Mammary epithelial cell (primary cell): ENCODE measurements at regions of chr1 and their contacts with region 1.

Region 1: DNA sequence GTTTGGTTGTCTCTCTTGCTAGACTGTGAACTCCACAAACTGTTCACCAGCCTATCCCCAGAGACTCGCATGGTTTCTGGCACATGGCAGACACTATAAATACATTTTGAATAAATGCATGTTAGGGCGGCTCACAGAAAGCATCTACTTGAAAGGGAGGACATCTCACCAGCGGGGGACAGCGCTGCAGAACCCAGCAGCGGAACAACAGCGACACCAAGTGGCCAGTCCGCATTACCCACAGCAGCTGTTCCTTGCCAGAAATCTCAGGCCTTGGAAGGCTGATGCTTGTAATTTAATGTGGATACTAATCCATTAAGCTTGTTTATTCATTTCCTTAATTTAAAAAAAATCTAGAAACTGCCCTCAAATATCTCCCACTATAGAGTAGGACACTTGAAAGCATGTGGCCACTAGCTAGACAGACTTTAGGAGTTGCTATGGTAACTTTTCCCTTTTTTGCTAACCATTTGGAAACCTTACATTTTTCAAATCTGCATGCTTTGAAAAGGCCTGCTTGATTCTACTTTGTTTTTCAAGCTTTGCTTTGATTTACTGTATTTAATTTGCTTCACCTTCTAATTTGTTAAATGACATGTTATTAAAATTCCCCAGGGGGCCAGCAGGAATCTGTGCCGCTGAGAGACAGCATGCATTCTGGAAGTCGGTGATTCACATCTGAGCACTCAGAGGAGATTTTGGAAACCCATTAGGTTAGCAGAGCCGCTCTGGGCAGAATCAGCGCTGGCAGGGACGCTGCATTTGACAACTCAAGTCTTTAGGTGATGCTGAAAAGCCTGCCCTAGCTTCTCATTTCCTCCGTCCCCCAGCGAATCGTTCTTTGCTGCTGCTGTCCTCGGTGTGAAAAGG is 63.5 kb upstream of the SSX2IP start:
- DNase-seq: peak; percentile 54
- H3K4me3 ChIP-seq: no peak overlapping the region
- H3K27ac ChIP-seq: no peak overlapping the region
- H3K4me1 ChIP-seq: peaks cover 24% of the 10 kb centered on the region
- H3K27me3 ChIP-seq: no peaks in the 10 kb centered on the region
- CTCF ChIP-seq: peak; percentile 96 to 99

Region 2: DNA sequence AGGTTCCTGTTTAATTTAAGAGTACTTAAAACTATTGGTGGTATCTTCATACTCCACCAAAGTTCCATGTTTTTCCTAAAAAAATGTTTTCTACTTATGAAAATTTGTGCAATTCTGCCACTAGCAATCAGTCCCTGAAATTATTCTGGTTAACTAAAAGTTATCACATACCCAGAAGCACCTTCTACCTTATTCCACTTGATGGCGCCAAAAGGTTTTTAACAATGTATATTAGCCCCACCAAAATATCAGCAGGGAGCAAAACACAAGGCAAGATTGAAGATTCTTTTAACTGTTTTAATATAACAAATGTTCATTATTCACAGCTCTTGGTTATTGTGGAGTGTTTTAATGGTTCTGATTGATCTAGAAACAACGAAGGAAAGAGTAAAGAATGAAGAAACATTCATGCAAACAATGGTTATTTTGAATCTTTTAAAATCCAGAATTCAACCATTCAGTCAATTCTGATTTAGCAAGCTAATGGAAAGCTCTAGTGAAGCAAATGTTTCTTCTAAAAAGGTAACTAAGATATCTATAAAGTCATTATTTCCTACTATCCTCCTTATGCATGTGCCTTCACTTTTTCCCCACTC is 822.0 kb before region 1 on chr1:
- CTCF ChIA-PET with region 1: no interaction called
- dilution Hi-C with region 1: no loop called
- in situ Hi-C with region 1: no loop called
- intact Hi-C with region 1: loop called (anchors 1 kb)
- DNase-seq: peak; percentile 16
- H3K4me3 ChIP-seq: no peak overlapping the region
- H3K27ac ChIP-seq: no peak overlapping the region
- H3K4me1 ChIP-seq: no peaks in the 10 kb centered on the region
- H3K27me3 ChIP-seq: no peaks in the 10 kb centered on the region
- CTCF ChIP-seq: peak; percentile 67 to 75

Region 3: DNA sequence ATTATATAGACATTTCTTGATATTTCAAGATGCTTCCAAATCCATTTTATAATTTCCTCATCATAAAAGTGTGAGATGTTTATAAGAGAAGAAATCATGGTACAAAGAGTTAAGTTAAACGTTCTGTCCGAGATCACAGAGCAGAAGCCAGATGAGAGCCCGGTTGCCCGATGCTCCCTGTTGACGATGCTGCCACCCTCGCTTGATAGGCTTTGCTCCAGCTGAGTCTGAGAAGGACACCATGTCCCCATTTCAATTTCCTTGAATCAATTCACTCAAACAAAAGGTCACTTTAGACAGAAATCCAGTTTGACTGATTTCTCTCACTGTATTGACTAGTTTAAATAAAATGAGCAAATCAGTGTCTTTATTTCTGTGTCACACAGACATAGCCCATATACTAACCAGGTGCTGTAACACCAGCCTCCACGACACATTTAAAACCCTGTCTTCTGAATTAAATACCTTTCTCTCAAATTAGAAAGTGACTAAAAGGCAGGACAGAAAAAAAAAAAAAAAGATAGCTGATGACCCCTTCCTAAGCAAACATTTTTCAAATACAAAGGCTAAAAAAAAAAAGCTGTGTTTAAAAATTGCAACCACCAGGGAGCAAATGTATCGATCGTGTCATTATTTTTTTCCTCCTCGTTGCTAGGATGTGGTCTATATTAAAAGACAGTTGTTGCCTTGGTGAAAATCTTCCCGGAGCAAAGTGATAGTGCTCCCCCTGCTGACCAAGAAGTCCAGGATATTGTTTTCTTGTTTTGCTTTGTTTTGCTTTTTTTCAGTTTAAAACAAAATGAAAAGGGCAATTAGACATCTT is 320.3 kb before region 1 on chr1:
- CTCF ChIA-PET with region 1: no interaction called
- dilution Hi-C with region 1: loop called (anchors 25 kb)
- in situ Hi-C with region 1: loop called (anchors 10 to 25 kb)
- intact Hi-C with region 1: loop called (anchors 2 kb)
- DNase-seq: peak; percentile 61
- H3K4me3 ChIP-seq: no peak overlapping the region
- H3K27ac ChIP-seq: peak overlapping the region; percentile 33
- H3K4me1 ChIP-seq: peaks cover 16% of the 10 kb centered on the region
- H3K27me3 ChIP-seq: no peaks in the 10 kb centered on the region
- CTCF ChIP-seq: peak; percentile 66 to 73

Region 4: DNA sequence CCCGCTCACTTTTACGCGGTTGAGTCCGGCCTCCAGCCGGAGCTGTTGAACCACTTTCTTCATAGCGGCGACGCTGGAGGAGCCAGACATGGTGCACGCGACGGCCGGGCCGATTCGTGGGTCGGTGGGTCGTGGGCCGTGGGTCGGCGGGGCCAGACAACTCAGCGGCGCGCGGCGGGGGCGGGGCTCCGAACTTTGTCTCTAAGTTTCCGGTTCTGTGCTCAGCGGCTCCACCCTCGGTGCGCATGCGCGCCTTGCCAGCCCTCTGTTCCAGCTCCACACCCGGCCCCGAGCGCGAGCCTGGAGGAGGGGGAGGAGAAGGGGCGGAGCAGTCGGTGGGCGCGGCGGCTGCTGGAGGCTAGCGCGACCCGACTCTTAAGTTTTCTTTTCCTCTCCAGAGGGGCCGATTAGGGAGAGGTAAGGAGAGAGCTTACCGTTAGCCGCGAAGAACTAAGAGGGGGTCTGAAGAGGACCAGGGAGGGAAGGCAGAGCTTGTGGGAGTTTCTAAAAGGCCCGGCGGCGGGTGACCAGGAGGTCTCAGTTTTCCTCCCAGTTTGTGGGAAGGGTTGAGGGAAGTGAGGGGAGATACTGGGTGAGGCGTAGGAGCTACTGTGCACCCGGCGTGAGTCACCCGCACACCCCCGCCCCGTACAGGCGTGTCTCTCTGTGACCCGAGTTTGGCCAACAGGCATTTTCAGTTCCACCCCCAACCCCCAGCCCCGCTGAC is 247.6 kb before region 1 on chr1 and contains the starts of genes GNG5 and SPATA1:
- CTCF ChIA-PET with region 1: no interaction called
- dilution Hi-C with region 1: no loop called
- in situ Hi-C with region 1: no loop called
- intact Hi-C with region 1: loop called (anchors 1 kb)
- DNase-seq: peak; percentile 95
- H3K4me3 ChIP-seq: peak within 1 kb of the TSS; percentile 85 to 98 (median 95)
- H3K27ac ChIP-seq: peak within 1 kb of the TSS; percentile 92
- H3K4me1 ChIP-seq: peaks cover 16% of the 10 kb centered on the region
- H3K27me3 ChIP-seq: no peaks in the 10 kb centered on the region
- CTCF ChIP-seq: no peak
- total RNA-seq, gene GNG5: 20.5 to 115 TPM
- total RNA-seq, gene SPATA1: 0.33 to 1.4 TPM

Region 5: GRCh38 chr1:84644472-84644871 is 109.3 kb before region 1 on chr1:
- CTCF ChIA-PET with region 1: no interaction called
- dilution Hi-C with region 1: no loop called
- in situ Hi-C with region 1: loop called in 1 of 2 experiments (anchors 10 kb)
- intact Hi-C with region 1: no loop called
- DNase-seq: no peak
- H3K4me3 ChIP-seq: no peak overlapping the region
- H3K27ac ChIP-seq: no peak overlapping the region
- H3K4me1 ChIP-seq: no peaks in the 10 kb centered on the region
- H3K27me3 ChIP-seq: no peaks in the 10 kb centered on the region
- CTCF ChIP-seq: no peak

Region 6: GRCh38 chr1:84690397-84691121 is 63.2 kb before region 1 on chr1 and contains the start of gene SSX2IP:
- CTCF ChIA-PET with region 1: no interaction called
- dilution Hi-C with region 1: no loop called
- in situ Hi-C with region 1: no loop called
- intact Hi-C with region 1: loop called (anchors 2 kb)
- DNase-seq: peak; percentile 96
- H3K4me3 ChIP-seq: peak within 1 kb of the TSS; percentile 75 to 83 (median 79)
- H3K27ac ChIP-seq: peak within 1 kb of the TSS; percentile 46
- H3K4me1 ChIP-seq: peaks cover 17% of the 10 kb centered on the region
- H3K27me3 ChIP-seq: no peaks in the 10 kb centered on the region
- CTCF ChIP-seq: no peak
- total RNA-seq, gene SSX2IP: 11.3 to 22.5 TPM

Region 7: GRCh38 chr1:84896279-84896678 is 142.5 kb after region 1 on chr1:
- CTCF ChIA-PET with region 1: no interaction called
- dilution Hi-C with region 1: no loop called
- in situ Hi-C with region 1: no loop called
- intact Hi-C with region 1: no loop called
- DNase-seq: no peak
- H3K4me3 ChIP-seq: no peak overlapping the region
- H3K27ac ChIP-seq: no peak overlapping the region
- H3K4me1 ChIP-seq: peaks cover 22% of the 10 kb centered on the region
- H3K27me3 ChIP-seq: no peaks in the 10 kb centered on the region
- CTCF ChIP-seq: no peak

Region 8: GRCh38 chr1:85109475-85109874 is 355.7 kb after region 1 on chr1:
- CTCF ChIA-PET with region 1: no interaction called
- dilution Hi-C with region 1: no loop called
- in situ Hi-C with region 1: no loop called
- intact Hi-C with region 1: no loop called
- DNase-seq: peak; percentile 35
- H3K4me3 ChIP-seq: no peak overlapping the region
- H3K27ac ChIP-seq: no peak overlapping the region
- H3K4me1 ChIP-seq: no peaks in the 10 kb centered on the region
- H3K27me3 ChIP-seq: no peaks in the 10 kb centered on the region
- CTCF ChIP-seq: peak; percentile 87 to 95